OCI-LY7 (cell line): ENCODE measurements at regions of chr2 and their contacts with region 1.

Region 1: GRCh38 chr2:170101778-170102177 is 76.2 kb upstream of the MYO3B start:
- DNase-seq: no peak
- H3K4me3 ChIP-seq: no peak overlapping the region
- H3K27ac ChIP-seq: no peak overlapping the region
- H3K4me1 ChIP-seq: no peaks in the 10 kb centered on the region
- CTCF ChIP-seq: no peak

Region 2: DNA sequence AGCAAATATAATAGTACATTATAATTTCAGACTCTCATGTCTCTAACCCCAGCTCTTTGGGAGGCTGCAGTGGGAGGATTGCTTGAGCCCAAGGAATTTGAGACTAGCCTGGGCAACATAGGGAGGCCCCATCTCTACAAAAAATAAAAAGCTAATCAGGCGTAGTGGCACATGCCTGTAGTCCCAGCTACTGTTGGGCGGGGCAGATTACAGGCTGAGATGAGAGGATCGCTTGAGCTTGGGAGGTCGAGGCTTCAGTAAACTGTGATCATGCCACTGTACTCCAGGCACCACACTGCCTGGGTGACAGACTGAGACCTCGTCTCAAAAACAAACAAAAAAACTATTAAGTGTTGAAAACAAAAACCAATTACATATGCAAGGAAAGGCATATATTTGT is 46.8 kb before region 1 on chr2:
- CTCF ChIA-PET with region 1: no interaction called
- POLR2A ChIA-PET with region 1: no interaction called
- intact Hi-C with region 1: loop called (anchors 2 kb)
- DNase-seq: no peak
- H3K4me3 ChIP-seq: no peak overlapping the region
- H3K27ac ChIP-seq: no peak overlapping the region
- H3K4me1 ChIP-seq: no peaks in the 10 kb centered on the region
- CTCF ChIP-seq: no peak